ENCODE measurements at regions of chr1 and their contacts with region 1.

Region 1: GRCh38 chr1:214261206-214262123 is 19.5 kb upstream of the SMYD2 start:
- DNase-seq: peak; percentile 87
- H3K4me3 Mint-ChIP-seq: no peak overlapping the region
- H3K27ac Mint-ChIP-seq: no peak overlapping the region
- H3K4me1 Mint-ChIP-seq: peaks cover 15% of the 10 kb centered on the region
- H3K27me3 Mint-ChIP-seq: peaks cover 52% of the 10 kb centered on the region

Region 2: DNA sequence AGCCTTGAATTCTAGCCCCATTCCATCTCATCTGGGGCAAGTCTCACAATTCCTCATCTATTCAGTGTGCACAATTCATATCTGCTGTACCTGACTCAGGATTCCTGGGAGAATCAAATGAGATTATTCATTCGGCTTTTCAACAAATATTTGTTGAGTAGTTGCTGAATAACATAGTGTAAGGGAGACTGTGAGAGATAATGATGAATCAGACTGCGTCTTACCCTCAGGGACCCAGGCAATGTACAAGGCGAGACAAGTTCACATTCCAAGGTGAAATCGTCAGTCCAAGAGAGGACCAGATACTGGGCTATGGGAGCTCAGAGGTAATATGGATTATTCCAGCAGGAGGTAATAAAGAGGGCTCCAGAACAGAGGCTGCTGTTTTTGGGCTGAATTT is 48.3 kb before region 1 on chr1:
- CTCF ChIA-PET with region 1: interaction called, 22 read pairs
- DNase-seq: no peak
- H3K4me3 Mint-ChIP-seq: no peak overlapping the region
- H3K27ac Mint-ChIP-seq: no peak overlapping the region
- H3K4me1 Mint-ChIP-seq: no peaks in the 10 kb centered on the region
- H3K27me3 Mint-ChIP-seq: peaks cover 32% of the 10 kb centered on the region

Region 3: GRCh38 chr1:214277704-214278635 is 16.5 kb after region 1 on chr1:
- CTCF ChIA-PET with region 1: interaction called, 22 read pairs
- DNase-seq: no peak
- H3K4me3 Mint-ChIP-seq: no peak overlapping the region
- H3K27ac Mint-ChIP-seq: no peak overlapping the region
- H3K4me1 Mint-ChIP-seq: peaks cover 28% of the 10 kb centered on the region
- H3K27me3 Mint-ChIP-seq: peaks cover 19% of the 10 kb centered on the region

Region 4: DNA sequence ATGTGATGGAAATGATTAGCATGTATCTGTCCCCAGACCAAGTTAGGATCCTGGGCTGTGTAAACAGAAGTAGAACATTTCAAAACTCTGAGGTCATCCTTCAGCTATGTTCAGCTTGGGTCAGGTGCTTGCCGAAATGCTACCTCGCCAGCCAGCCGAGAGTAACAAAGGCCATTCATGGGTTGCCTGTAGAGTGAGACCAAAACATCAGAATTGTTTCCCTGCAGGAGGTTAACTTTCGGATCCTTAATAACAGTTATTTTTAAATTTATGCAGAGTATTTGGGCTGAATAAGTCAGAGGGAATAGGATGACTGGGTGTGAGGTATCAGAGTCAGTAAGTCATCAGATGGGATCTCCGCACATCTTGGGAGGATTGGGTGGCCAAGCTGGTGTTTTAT is 55.1 kb after region 1 on chr1:
- CTCF ChIA-PET with region 1: interaction called, 34 read pairs
- DNase-seq: no peak
- H3K4me3 Mint-ChIP-seq: no peak overlapping the region
- H3K27ac Mint-ChIP-seq: no peak overlapping the region
- H3K4me1 Mint-ChIP-seq: peaks cover 6% of the 10 kb centered on the region
- H3K27me3 Mint-ChIP-seq: no peaks in the 10 kb centered on the region

Region 5: GRCh38 chr1:214584805-214585766 is 323.6 kb after region 1 on chr1:
- CTCF ChIA-PET with region 1: interaction called, 11 read pairs
- DNase-seq: no peak
- H3K4me3 Mint-ChIP-seq: no peak overlapping the region
- H3K27ac Mint-ChIP-seq: no peak overlapping the region
- H3K4me1 Mint-ChIP-seq: no peaks in the 10 kb centered on the region
- H3K27me3 Mint-ChIP-seq: peaks cover 9% of the 10 kb centered on the region